Cardiac septum (tissue), 1 donor: ENCODE measurements at regions of chr3 and their contacts with region 1.

Region 1: DNA sequence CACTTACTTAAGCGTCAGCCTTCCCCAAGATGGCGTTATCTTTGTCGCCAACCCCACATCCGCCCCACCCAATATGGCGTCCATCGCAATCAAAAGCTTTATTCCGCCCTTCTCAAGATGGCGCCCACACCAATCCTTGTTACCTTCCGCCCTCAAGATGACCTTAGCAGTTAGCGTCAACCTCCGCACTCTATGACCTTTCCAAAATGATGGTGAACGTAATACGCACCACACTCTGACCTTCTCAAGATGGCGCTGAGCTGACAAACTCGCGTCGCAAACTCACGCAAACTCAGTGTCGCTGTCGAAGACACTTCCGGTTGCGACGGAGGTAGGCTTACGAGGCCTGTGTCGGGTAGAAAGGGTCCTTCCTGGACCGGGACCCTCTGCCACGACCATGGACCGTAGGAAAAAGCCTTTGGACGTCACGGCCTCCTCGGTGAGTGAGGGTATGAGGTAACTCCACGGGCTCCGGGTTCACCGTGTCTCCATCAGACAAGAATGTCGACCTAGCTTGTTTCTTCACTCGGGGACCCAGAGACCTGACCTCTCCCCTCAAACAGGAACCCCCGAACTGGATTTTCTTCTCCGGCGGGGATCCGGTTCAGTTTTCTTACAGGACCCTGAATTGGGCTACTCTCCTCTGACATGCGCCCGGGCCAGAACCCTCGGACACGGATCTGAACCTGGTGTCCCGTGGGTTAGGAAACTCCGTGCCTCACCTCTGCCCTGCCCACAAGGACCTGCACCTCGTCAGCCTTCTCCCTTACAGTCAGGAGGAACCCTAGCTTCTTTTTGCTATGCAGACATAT is at the start of gene CCDC174:
- DNase-seq: peak; percentile 98
- total RNA-seq, gene CCDC174: 14.7 TPM

Region 2: GRCh38 chr3:14178247-14179113 is 473.2 kb before region 1 on chr3 and contains the starts of genes LSM3 and XPC:
- intact Hi-C with region 1: loop called (anchors 5 kb)
- DNase-seq: peak; percentile 99
- total RNA-seq, gene LSM3: 13.2 TPM
- total RNA-seq, gene XPC: 16.7 TPM

Region 3: DNA sequence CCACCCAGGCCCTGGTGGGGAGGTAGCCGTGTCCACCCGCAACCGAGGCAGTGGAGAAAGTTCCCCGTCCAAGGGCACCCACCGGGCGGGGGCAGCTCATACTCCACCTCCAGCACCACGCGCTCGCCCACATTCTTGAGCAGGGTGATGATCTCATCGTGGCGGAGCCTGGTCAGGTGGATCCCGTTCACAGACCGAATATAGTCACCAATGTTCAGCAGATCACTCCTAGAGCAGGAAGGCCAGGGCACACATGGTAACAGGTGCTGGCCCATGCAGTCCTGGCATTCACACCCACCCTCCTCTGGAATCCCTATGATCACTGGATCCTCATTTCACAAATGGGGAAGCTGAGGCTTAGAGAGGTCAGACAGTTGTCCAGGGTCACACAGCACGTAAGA is 127.3 kb before region 1 on chr3:
- intact Hi-C with region 1: loop called (anchors 5 kb)
- DNase-seq: peak; percentile 90

Region 4: DNA sequence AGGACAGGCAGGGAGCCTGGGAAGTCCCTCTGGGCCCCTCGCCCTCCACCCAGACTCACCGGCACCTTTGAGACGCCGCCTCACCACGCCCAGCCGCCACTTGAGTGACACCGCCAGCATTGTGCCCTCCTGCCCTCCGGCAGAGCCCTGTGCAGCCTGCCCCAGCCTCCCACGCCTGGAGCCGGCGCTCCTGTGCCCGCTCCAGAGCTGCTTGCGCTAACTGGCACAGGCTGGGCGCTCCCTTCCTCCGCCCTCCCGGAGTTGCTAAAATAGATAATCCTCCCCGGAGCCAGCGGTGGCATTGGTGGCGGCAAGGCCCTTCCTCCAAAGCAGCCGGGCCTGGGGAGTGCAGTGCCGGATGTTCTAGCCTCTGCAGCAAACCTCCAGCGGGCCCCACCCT is 95.8 kb before region 1 on chr3:
- intact Hi-C with region 1: loop called (anchors 5 kb)
- DNase-seq: peak; percentile 84